ENCODE measurements at regions of chr6 and their contacts with region 1.

Region 1: GRCh38 chr6:45714741-45715507 is 300.7 kb downstream of the CLIC5 start:
- DNase-seq: peak; percentile 73
- H3K4me3 Mint-ChIP-seq: no peak overlapping the region
- H3K27ac Mint-ChIP-seq: no peak overlapping the region
- H3K4me1 Mint-ChIP-seq: peaks cover 35% of the 10 kb centered on the region
- H3K27me3 Mint-ChIP-seq: no peaks in the 10 kb centered on the region

Region 2: GRCh38 chr6:44593539-44593944 is 1121.4 kb before region 1 on chr6:
- CTCF ChIA-PET with region 1: no interaction called
- intact Hi-C with region 1: loop called (anchors 2 kb)
- DNase-seq: peak; percentile 78
- H3K4me3 Mint-ChIP-seq: no peak overlapping the region
- H3K27ac Mint-ChIP-seq: no peak overlapping the region
- H3K4me1 Mint-ChIP-seq: peaks cover 3% of the 10 kb centered on the region
- H3K27me3 Mint-ChIP-seq: peaks cover 4% of the 10 kb centered on the region

Region 3: DNA sequence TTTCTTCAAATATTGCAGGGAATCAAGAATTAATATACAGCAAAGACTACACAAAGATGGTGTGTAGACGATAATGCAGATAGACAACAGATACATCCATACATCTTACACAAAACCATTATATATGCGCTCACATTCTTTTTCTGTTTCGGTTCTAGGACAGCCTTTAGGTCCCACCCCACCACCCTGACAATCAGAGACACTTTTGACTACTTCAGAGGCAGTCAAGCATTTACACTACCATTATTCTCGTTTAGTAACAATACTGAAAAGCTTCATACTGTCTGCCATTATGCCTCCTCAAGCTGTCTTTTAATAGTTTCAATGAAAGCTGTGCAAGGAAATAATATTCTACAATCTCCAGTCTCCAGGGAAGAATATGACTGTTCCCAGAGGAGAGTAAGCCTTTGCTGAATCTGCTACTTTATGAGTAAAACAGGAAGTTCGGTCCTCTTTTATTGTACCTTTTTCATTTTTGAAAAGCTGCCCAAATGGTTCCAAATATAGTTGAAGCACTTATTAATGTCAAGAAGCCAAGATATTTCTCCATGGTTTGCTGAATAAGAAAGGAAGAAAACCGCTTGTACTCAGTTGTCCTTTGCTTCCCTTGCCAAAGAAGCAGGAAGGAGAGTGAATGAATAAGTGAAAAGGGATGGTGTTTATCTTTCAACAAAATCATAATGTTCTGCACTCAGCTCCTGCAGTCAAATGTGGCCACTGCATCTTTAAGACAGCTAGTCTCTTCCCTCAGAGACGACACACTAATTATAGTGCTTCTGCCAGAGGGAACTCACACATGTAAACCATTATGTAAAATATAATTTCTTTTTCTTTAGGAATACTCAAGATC is 859.1 kb before region 1 on chr6:
- CTCF ChIA-PET with region 1: no interaction called
- intact Hi-C with region 1: loop called (anchors 5 kb)
- DNase-seq: no peak
- H3K4me3 Mint-ChIP-seq: no peak overlapping the region
- H3K27ac Mint-ChIP-seq: no peak overlapping the region
- H3K4me1 Mint-ChIP-seq: peaks cover 39% of the 10 kb centered on the region
- H3K27me3 Mint-ChIP-seq: no peaks in the 10 kb centered on the region

Region 4: DNA sequence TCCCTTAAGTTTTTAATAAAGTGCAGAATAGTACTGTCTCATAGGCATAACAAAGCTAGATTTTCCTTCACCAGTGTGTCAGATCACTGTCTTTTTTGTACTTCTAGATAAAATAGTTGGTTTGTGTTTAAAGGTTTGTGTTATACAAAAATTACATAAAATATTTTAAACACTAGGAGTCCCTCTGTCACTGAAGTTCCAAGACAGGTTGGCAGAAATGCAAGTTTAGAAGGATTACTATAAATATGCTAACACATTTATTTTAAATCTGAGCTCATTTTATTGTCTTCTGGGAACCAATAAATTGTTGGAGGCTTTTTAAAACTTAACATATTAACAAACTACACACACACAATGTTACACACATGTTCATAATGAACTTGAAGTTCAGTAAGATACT is 417.6 kb before region 1 on chr6:
- CTCF ChIA-PET with region 1: no interaction called
- intact Hi-C with region 1: loop called (anchors 10 kb)
- DNase-seq: no peak
- H3K4me3 Mint-ChIP-seq: no peak overlapping the region
- H3K27ac Mint-ChIP-seq: no peak overlapping the region
- H3K4me1 Mint-ChIP-seq: peaks cover 35% of the 10 kb centered on the region
- H3K27me3 Mint-ChIP-seq: no peaks in the 10 kb centered on the region

Region 5: GRCh38 chr6:45436544-45437438 is 278.1 kb before region 1 on chr6:
- CTCF ChIA-PET with region 1: interaction called, 7 read pairs
- intact Hi-C with region 1: loop called (anchors 1 kb)
- DNase-seq: peak; percentile 77
- H3K4me3 Mint-ChIP-seq: peak overlapping the region; percentile 35
- H3K27ac Mint-ChIP-seq: peak overlapping the region; percentile 76
- H3K4me1 Mint-ChIP-seq: peaks cover 58% of the 10 kb centered on the region
- H3K27me3 Mint-ChIP-seq: no peaks in the 10 kb centered on the region

Region 6: GRCh38 chr6:45599053-45599452 is 115.9 kb before region 1 on chr6:
- CTCF ChIA-PET with region 1: no interaction called
- intact Hi-C with region 1: no loop called
- DNase-seq: no peak
- H3K4me3 Mint-ChIP-seq: no peak overlapping the region
- H3K27ac Mint-ChIP-seq: no peak overlapping the region
- H3K4me1 Mint-ChIP-seq: peaks cover 13% of the 10 kb centered on the region
- H3K27me3 Mint-ChIP-seq: peaks cover 1% of the 10 kb centered on the region

Region 7: DNA sequence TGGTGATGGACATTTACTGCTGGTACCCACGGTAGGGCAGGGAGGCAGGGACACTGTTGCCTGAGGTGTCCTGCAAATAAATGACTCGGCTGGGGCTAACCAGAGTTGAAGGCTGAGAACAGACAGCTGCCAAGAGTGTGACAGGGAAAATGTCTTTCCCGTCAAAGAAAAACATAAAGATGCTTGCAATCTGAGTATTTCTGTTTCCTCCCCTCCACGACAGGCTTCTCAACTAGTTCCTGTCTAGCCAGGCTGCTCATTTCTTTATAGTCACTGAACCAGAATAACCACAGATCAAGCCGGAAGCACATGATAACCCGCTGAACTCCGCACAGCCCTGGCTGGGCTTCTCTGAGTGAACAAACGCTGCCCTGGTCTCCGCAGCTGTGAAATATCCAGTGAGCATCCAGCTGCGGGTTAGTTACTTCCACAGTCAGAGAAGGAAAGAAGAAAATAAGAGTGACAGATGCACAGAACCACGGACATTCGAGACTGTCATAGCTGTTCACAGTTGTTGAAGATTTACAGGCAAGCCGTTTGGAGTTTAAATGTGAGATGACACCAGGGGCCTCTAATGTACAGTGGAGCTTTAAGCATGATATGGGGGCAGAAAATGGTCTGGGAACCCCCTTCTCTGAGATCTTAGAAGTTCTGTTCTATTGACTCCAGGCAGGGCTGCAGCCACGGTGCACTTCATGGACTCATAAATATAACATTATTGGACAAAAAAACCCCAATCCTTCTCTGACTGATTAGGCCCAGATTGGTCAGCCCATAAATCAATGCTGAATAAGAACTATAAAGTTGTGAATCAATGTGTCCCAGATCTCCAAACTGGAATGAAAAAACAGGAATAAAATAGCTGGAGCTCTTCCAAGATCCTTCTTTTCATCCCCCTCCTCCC is 37.3 kb before region 1 on chr6:
- CTCF ChIA-PET with region 1: interaction called, 6 read pairs
- intact Hi-C with region 1: loop called (anchors 1 kb)
- DNase-seq: peak; percentile 74
- H3K4me3 Mint-ChIP-seq: peak overlapping the region; percentile 45
- H3K27ac Mint-ChIP-seq: peak overlapping the region; percentile 68
- H3K4me1 Mint-ChIP-seq: peaks cover 33% of the 10 kb centered on the region
- H3K27me3 Mint-ChIP-seq: no peaks in the 10 kb centered on the region

Region 8: GRCh38 chr6:46011241-46012085 is 296.5 kb after region 1 on chr6:
- CTCF ChIA-PET with region 1: no interaction called
- intact Hi-C with region 1: loop called (anchors 1 kb)
- DNase-seq: peak; percentile 78
- H3K4me3 Mint-ChIP-seq: no peak overlapping the region
- H3K27ac Mint-ChIP-seq: peak overlapping the region; percentile 72
- H3K4me1 Mint-ChIP-seq: peaks cover 45% of the 10 kb centered on the region
- H3K27me3 Mint-ChIP-seq: peaks cover 6% of the 10 kb centered on the region